Prostate gland (tissue), 2 donors: ENCODE measurements at regions of chr15 and their contacts with region 1.

Region 1: GRCh38 chr15:65032801-65033537 is 3.5 kb upstream of the MTFMT start:
- DNase-seq: peak; percentile 42
- H3K4me3 ChIP-seq: no peak overlapping the region
- H3K27ac ChIP-seq: no peak overlapping the region
- H3K4me1 ChIP-seq: peaks cover 4% of the 10 kb centered on the region
- H3K27me3 ChIP-seq: no peaks in the 10 kb centered on the region
- CTCF ChIP-seq: peak; percentile 16 to 73 (median 50)
- POLR2A ChIP-seq: no peak

Region 2: DNA sequence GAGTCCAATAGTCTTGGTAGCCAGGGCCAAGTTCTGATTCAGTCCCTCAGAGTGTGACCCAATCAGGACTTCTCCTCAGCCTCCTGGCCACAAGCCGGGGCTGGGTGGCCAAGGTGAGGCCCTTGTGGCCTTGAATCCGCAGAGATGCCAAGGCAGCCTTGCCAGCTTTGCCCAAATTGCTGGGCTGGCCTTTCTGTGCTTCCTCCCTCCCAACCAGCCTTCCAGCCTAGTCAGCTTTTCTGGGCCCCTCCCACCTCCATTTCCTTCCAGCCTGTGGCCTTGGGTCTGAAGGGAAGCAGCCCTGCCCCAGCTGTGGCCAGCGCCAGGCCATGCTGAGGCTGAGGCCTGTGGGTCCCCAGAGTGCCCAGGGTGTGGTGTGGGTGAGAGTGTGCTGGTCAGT is 155.5 kb before region 1 on chr15:
- intact Hi-C with region 1: no loop called
- DNase-seq: no peak
- H3K4me3 ChIP-seq: no peak overlapping the region
- H3K27ac ChIP-seq: peak overlapping the region in 1 of 2 donors; percentile 22
- H3K4me1 ChIP-seq: no peaks in the 10 kb centered on the region
- H3K27me3 ChIP-seq: no peaks in the 10 kb centered on the region
- CTCF ChIP-seq: no peak
- POLR2A ChIP-seq: no peak

Region 3: GRCh38 chr15:65083262-65083701 is 50.3 kb after region 1 on chr15:
- intact Hi-C with region 1: loop called (anchors 2 kb)
- DNase-seq: no peak
- H3K4me3 ChIP-seq: no peak overlapping the region
- H3K27ac ChIP-seq: peak overlapping the region in 1 of 2 donors; percentile 21
- H3K4me1 ChIP-seq: no peaks in the 10 kb centered on the region
- H3K27me3 ChIP-seq: no peaks in the 10 kb centered on the region
- CTCF ChIP-seq: peak in 3 of 4 experiments; percentile 14 to 45 (median 32)
- POLR2A ChIP-seq: no peak

Region 4: GRCh38 chr15:65146438-65146837 is 113.5 kb after region 1 on chr15:
- intact Hi-C with region 1: no loop called
- DNase-seq: no peak
- H3K4me3 ChIP-seq: no peak overlapping the region
- H3K27ac ChIP-seq: no peak overlapping the region
- H3K4me1 ChIP-seq: no peaks in the 10 kb centered on the region
- H3K27me3 ChIP-seq: no peaks in the 10 kb centered on the region
- CTCF ChIP-seq: no peak
- POLR2A ChIP-seq: no peak

Region 5: GRCh38 chr15:65249641-65250040 is 216.7 kb after region 1 on chr15:
- intact Hi-C with region 1: no loop called
- DNase-seq: no peak
- H3K4me3 ChIP-seq: no peak overlapping the region
- H3K27ac ChIP-seq: no peak overlapping the region
- H3K4me1 ChIP-seq: no peaks in the 10 kb centered on the region
- H3K27me3 ChIP-seq: no peaks in the 10 kb centered on the region
- CTCF ChIP-seq: no peak
- POLR2A ChIP-seq: no peak

Region 6: DNA sequence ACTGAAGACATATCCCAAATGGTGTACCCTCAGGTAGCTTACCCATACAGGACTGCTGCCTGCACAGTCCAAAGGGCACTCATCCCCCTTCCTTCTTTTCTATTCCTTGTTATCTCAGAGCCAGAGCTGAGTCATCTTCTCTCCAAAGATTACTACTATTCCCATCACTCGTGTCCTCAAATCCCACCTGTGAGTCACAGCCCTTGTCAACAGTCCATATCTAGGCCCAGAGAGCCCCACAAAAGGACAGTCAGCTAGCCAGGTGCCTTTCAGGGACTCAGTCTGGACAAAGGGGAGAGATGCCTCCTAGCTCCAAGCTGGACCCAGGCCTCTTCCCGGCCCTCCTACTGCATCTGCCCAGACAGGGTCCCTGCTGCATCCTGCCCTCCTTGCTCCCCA is 242.8 kb after region 1 on chr15:
- intact Hi-C with region 1: loop called (anchors 10 kb)
- DNase-seq: no peak
- H3K4me3 ChIP-seq: no peak overlapping the region
- H3K27ac ChIP-seq: no peak overlapping the region
- H3K4me1 ChIP-seq: no peaks in the 10 kb centered on the region
- H3K27me3 ChIP-seq: no peaks in the 10 kb centered on the region
- CTCF ChIP-seq: no peak
- POLR2A ChIP-seq: no peak

Region 7: DNA sequence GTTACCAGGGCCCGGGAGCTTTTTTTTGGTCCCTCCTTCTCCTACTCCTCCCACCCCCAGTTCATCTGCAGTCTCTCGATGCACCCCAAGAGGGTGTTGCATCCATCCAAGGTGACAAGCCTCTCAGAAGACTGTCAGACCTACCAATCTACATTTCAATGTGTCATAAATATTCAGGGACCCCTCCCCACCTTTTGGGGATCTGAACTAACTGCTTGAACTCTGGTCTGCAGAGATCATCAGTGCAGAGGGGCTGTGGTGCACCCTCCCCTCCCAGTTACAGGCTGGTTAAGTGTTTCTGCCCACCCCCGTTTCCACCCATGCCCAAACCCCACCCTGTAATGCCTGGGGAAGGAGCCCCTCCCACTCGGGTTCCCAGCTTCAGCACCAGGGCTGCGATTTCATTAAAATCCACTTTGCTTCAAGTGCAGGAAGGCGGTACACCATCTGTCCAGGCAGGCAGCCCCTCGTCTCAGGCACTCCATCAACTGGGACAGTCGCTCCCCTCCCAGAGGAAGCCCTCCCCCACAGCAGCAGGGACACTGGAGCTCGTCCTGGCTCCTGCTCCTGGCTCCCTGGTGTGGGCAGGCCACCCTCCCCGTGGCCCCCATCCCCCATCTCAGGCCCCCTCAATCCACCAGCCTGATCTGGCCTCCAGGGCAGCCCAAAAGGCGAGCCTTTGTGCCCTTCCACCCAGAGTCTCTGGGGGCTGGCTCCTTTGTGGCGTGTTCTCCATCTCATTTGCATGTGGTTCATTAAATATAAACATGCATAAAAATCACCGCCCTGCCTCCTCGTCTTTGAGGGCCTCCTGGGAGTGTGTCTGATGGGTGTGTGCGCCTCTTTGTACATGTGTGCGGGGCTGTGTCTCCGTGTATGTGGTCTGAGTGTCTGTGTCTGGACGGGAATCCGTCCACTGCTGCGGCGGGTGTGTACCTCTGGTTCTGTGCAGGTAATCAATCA is 303.8 kb after region 1 on chr15:
- intact Hi-C with region 1: no loop called
- DNase-seq: no peak
- H3K4me3 ChIP-seq: no peak overlapping the region
- H3K27ac ChIP-seq: no peak overlapping the region
- H3K4me1 ChIP-seq: no peaks in the 10 kb centered on the region
- H3K27me3 ChIP-seq: no peaks in the 10 kb centered on the region
- CTCF ChIP-seq: no peak
- POLR2A ChIP-seq: no peak